ENCODE measurements at regions of chr14 and their contacts with region 1.

Region 1: DNA sequence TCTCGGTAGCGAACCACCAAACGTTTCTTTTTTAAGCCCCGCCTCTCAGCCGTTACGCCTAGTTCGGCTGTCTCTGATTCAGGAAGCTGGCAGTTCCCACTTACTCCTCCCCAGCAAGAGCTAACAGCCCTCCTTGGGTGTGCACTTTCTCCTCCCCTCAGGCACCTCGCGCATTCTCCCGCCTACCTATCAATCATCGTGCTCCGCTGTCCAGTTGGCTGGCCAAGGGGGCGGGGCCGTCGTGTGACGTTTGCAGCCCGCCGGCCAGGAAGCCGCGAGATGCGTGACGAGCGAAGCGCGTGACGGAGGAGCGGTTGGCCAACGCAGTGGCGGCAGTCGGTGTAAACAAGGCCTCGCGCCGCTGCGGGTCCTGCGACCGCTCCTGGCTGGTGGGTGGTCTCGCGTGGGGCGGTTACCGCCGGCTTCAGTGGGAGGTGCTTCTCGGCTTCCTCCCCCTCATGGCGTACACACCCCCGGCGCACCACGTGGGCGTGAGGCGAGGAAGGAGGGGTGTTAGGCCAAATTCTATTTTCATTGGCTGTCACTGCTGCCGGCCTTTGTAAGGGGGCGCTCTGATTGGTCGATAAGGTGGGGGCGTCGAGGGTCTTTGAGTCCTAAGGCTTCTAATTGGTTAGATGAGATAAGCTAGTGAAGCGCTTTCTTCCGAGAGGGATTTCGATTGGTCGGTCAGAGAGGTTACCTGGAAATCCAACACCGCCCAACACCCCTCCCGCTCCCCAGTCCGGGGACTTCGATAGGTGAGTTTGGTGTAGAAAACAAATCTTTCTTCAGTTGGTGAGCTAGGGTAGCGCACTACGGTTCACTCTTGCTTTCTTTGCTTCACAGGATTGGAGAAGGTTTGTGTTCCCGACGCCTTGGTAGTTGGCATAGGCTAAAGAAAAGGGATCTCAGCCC is at the starts of genes DCAF11 and NRL:
- DNase-seq: peak; percentile 99
- H3K4me3 ChIP-seq: peak within 1 kb of the TSS; percentile 96
- CTCF ChIP-seq: no peak

Region 2: DNA sequence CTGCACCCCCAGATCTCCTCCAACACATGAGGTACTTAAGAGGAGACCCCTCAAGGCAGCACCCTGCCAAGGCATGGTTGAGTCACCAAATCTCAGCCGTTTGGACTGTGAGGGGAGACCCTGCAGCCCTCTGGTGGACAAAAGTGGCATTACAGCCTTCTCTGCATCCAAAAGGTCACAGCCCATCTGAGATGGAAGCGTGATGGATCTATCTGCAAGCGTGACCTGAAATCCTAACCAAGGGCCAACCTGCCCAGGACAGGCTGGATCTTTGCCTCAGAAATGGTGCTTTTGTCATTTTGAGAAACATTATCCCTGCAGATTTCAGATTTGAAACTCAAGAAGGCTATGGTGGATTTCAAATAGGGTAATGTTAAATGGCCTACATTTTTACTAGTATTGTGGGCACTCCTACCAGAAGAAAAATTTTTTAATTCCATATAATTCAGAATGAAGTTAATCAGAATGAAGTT is 184.9 kb before region 1 on chr14:
- CTCF ChIA-PET with region 1: no interaction called
- POLR2A ChIA-PET with region 1: no interaction called
- DNase-seq: no peak
- H3K4me3 ChIP-seq: no peak overlapping the region
- CTCF ChIP-seq: peak; percentile 87

Region 3: DNA sequence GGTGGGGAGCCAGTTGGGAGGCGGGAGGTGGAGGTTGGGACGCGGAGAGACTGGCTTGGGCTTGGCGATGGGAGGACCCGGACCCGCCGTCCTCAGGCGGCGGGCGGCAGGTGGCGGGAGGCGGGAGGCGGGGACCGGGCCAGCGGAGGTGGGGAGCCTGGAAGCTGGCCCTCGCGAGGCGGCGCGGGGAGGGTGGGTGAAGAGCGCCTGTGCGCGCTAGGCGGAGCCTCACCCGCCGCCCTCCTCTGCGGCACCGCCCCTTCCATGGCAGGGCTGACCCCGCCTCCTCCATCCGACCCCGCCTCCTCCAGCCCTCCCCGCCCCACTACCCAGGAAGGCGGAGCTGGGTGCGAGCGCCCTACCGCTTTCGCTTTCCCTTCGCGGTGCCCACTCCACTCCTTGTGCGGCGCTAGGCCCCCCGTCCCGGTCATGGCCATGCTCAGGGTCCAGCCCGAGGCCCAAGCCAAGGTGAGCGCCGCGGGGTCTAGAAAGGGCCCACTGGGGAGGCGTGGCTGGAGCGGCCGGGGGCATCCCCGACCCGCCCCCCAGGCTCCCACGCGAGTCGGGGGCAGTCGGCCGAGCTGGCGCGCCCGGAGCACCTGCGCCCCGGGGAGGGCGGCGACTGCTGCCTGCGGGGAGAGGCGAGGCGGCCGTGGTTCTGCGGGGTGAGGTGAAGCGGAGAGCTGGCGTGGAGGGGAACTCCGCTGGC is 21.2 kb after region 1 on chr14 and contains the start of gene PSME1:
- CTCF ChIA-PET with region 1: interaction called, 7 read pairs
- POLR2A ChIA-PET with region 1: interaction called, 14 read pairs
- DNase-seq: no peak
- H3K4me3 ChIP-seq: peak within 1 kb of the TSS; percentile 73
- CTCF ChIP-seq: no peak